Head of caudate nucleus (tissue), 42 donors: ENCODE measurements at regions of chrX and their contacts with region 1.

Region 1: GRCh38 chrX:107710617-107711391 is 64.8 kb downstream of the TSC22D3 start:
- DNase-seq: peak in 2 of 42 donors; percentile 22 to 41

Region 2: GRCh38 chrX:107672955-107673378 is 37.8 kb before region 1 on chrX:
- intact Hi-C with region 1: loop called (anchors 5 kb)
- DNase-seq: peak in 38 of 42 donors; percentile 9 to 72 (median 50)